Left lung (tissue), 14 donors: ENCODE measurements at regions of chr10 and their contacts with region 1.

Region 1: DNA sequence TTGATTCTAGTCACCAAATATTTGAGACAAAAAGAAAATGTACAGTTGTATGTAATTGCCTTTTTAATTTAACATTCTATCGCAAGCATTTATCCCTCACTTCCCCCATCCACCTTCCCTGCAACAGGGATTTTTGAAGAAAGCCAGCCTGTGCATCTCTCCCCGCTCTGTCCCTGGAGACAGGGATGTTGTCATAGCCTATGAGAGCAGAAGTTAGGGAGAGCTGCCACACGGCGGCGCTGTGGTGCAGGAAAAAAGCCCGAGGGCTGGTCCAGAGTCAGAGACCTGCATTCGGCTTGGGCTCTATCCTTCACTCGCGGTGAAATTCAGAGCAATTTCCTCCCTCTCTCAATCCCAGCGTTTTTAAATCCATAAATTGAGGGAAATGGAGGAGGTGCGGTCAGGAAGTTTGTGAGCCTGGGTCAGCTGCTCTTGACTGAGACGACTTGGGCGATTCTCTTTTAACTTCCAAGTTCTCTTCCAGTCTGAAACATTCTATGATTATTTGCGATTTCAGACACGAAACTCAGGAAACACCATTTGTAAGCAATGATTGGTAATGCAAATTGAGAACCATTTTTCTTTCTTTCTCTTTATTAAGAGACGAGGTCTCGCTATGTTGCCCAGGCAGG is 17.5 kb downstream of the HKDC1 start:
- DNase-seq: peak; percentile 80 to 95 (median 86)
- ATAC-seq: peak; percentile 99
- H3K4me3 ChIP-seq: no peak overlapping the region
- H3K27ac ChIP-seq: no peak overlapping the region
- H3K4me1 ChIP-seq: peaks cover 0 to 20% of the 10 kb centered on the region in 2 donors
- H3K27me3 ChIP-seq: no peaks in the 10 kb centered on the region
- CTCF ChIP-seq: peak; percentile 92 to 93

Region 2: GRCh38 chr10:69179743-69180524 is 57.7 kb before region 1 on chr10 and contains the start of gene SUPV3L1:
- intact Hi-C with region 1: no loop called
- DNase-seq: peak; percentile 93 to 96 (median 95)
- ATAC-seq: peak; percentile 98
- H3K4me3 ChIP-seq: peak within 1 kb of the TSS; percentile 82 to 92
- H3K27ac ChIP-seq: peak within 1 kb of the TSS; percentile 83 to 93
- H3K4me1 ChIP-seq: peaks cover 9 to 29% of the 10 kb centered on the region in 2 donors
- H3K27me3 ChIP-seq: no peaks in the 10 kb centered on the region
- CTCF ChIP-seq: no peak
- polyA plus RNA-seq, gene SUPV3L1: 38.2 to 47.6 (median 41.6) TPM

Region 3: DNA sequence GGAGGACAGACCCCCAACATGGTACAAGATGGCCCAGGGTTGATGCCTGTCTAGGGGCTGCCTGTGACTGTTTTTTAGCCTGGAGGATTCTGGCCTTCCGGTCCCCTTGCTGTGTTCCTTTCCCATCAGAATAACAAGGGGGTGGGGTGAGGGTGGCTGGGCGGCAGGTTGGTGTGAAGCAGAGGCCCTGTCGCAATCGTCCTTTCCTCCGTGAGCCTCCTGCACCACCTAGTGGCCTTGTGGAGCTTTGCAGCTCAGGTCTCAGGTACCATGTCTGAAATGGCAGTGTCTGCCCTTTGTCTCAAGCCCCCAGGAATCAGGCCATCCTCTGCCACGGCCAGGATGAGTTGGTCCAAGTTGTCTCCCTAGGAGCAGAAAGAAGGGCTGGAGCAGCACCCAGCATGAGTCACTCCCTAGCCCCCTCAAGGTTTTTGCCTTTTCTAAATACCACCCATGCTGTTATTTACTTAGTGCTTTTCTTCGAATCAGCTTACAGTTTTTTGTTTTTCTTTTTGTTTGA is 154.9 kb after region 1 on chr10:
- intact Hi-C with region 1: loop called (anchors 5 to 10 kb)
- DNase-seq: peak; percentile 72 to 89 (median 88)
- ATAC-seq: peak; percentile 98
- H3K4me3 ChIP-seq: no peak overlapping the region
- H3K27ac ChIP-seq: no peak overlapping the region
- H3K4me1 ChIP-seq: peaks cover 0 to 12% of the 10 kb centered on the region in 2 donors
- H3K27me3 ChIP-seq: no peaks in the 10 kb centered on the region
- CTCF ChIP-seq: peak; percentile 87 to 93